Endothelial cell of umbilical vein (primary cell): ENCODE measurements at regions of chr7 and their contacts with region 1.

Region 1: DNA sequence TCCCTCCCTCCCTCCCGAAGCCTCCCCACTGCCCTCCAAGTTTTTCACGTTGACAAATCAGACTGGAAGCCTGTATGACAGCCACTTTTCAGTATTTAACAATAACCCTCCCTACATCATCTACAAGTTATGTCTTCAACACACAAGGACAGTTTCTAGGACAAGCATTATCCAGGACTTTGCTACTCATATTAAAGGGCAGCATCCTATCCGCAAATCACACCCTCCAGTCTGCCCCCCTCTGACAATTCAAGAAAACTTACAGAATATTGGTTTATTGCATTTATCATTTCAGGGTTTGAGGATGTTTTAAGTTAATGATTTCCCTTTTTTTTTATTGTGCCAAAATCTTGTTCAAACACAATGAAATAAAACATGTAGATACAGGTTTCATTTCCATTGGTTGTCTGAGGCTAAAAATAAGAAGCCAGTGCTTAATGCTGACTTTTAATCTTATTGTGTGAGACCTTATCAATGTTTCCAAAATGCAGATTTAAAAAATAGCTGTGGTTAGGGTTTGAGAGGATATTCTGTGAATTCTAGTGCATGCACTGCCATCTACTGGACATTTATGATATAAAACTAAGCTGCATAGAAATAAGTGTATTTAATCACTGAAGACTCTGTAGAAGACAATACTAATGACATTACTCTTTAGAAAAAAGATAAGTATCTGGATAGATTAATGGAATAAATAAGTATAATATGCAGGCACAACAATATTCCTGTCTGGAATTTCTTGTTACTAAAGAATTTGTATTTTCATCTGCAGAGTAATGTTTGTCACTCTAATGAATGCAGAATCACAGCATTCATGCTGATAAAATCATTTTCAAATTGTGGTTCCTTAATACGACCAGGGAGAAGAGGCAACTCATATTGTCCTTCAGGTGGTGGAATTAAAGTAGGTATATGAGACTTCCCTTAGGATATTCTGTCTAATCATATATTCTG is 64.1 kb downstream of the CAV1 start:
- DNase-seq: peak; percentile 85
- H3K4me3 ChIP-seq: no peak overlapping the region
- H3K27ac ChIP-seq: peak overlapping the region; percentile 42
- H3K4me1 ChIP-seq: peaks cover 38% of the 10 kb centered on the region
- H3K27me3 ChIP-seq: no peaks in the 10 kb centered on the region
- CTCF ChIP-seq: peak; percentile 10 to 27
- POLR2A ChIP-seq: no peak

Region 2: GRCh38 chr7:115869805-115870204 is 719.1 kb before region 1 on chr7:
- CTCF ChIA-PET with region 1: no interaction called
- POLR2A ChIA-PET with region 1: no interaction called
- dilution Hi-C with region 1: no loop called
- intact Hi-C with region 1: no loop called
- DNase-seq: no peak
- H3K4me3 ChIP-seq: no peak overlapping the region
- H3K27ac ChIP-seq: no peak overlapping the region
- H3K4me1 ChIP-seq: no peaks in the 10 kb centered on the region
- H3K27me3 ChIP-seq: peaks cover 0 to 2% of the 10 kb centered on the region in 2 experiments
- CTCF ChIP-seq: no peak
- POLR2A ChIP-seq: no peak

Region 3: GRCh38 chr7:116180302-116180701 is 408.6 kb before region 1 on chr7:
- CTCF ChIA-PET with region 1: interaction called, 144 read pairs
- POLR2A ChIA-PET with region 1: no interaction called
- dilution Hi-C with region 1: no loop called
- intact Hi-C with region 1: loop called (anchors 1 kb)
- DNase-seq: peak; percentile 70
- H3K4me3 ChIP-seq: no peak overlapping the region
- H3K27ac ChIP-seq: no peak overlapping the region
- H3K4me1 ChIP-seq: no peaks in the 10 kb centered on the region
- H3K27me3 ChIP-seq: no peaks in the 10 kb centered on the region
- CTCF ChIP-seq: peak; percentile 53 to 63
- POLR2A ChIP-seq: no peak

Region 4: GRCh38 chr7:116327752-116328151 is 261.2 kb before region 1 on chr7:
- CTCF ChIA-PET with region 1: interaction called, 5 read pairs
- POLR2A ChIA-PET with region 1: no interaction called
- dilution Hi-C with region 1: no loop called
- intact Hi-C with region 1: loop called (anchors 1 kb)
- DNase-seq: peak; percentile 97
- H3K4me3 ChIP-seq: peak overlapping the region; percentile 43 to 99 (median 98)
- H3K27ac ChIP-seq: peak overlapping the region; percentile 97
- H3K4me1 ChIP-seq: peaks cover 48% of the 10 kb centered on the region
- H3K27me3 ChIP-seq: no peaks in the 10 kb centered on the region
- CTCF ChIP-seq: no peak
- POLR2A ChIP-seq: peak; percentile 97

Region 5: GRCh38 chr7:116525913-116526861 is 62.7 kb before region 1 on chr7:
- CTCF ChIA-PET with region 1: interaction called, 64 read pairs
- POLR2A ChIA-PET with region 1: interaction called, 3 read pairs
- dilution Hi-C with region 1: no loop called
- intact Hi-C with region 1: loop called (anchors 1 kb)
- DNase-seq: peak; percentile 84
- H3K4me3 ChIP-seq: peak overlapping the region; percentile 74 to 98 (median 90)
- H3K27ac ChIP-seq: peak overlapping the region; percentile 97
- H3K4me1 ChIP-seq: peaks cover 72% of the 10 kb centered on the region
- H3K27me3 ChIP-seq: no peaks in the 10 kb centered on the region
- CTCF ChIP-seq: peak; percentile 72 to 88
- POLR2A ChIP-seq: peak; percentile 81

Region 6: DNA sequence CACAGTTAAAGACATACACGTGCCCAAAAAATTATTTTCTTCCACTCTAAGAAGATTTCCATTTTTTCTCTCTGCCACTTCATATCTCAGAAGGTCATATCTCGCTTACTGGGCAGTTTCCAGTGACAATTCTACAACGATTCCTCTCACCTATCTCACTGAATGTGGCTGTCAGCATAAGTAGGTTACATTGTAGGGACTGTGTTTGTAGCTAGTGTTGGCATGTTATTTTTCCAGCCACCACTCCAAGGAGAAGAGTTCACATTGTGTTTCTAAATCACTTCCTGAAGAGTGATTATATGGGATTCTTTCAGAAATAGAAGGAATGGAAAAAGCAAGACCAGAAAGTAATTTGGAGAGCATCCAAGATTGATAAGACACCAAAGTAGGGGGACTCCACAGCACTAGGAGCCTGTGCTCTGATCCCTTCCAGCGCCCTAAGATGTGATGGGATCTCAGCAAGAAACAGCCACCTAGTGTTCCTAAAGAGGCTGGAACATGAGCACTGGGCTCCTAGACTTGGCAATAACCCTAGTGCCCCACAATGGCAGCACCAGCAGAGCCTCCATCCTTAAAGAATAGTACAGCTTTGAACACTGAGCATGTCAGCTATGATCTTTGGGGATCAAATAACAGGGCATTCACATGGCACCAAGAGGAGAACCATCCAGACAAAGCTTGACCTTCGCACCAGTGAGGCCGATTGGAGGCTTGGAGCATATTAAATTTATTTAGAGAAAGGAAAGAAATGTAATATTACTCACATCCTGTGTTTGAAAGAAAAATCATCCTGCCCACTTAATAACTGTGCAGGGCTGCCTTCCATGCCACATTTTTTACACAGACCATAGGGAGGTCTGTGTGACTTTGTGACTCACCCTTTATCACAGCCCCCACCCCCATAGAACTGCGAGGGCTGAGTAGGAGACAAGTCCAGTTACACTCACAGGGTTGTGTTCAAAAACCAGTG is 12.3 kb before region 1 on chr7:
- CTCF ChIA-PET with region 1: interaction called, 21 read pairs
- POLR2A ChIA-PET with region 1: no interaction called
- dilution Hi-C with region 1: no loop called
- intact Hi-C with region 1: no loop called
- DNase-seq: peak; percentile 98
- H3K4me3 ChIP-seq: peak overlapping the region in 1 of 3 experiments; percentile 10
- H3K27ac ChIP-seq: peak overlapping the region; percentile 95
- H3K4me1 ChIP-seq: peaks cover 51% of the 10 kb centered on the region
- H3K27me3 ChIP-seq: no peaks in the 10 kb centered on the region
- CTCF ChIP-seq: no peak
- POLR2A ChIP-seq: peak; percentile 45

Region 7: GRCh38 chr7:116726713-116727431 is 138.0 kb after region 1 on chr7:
- CTCF ChIA-PET with region 1: interaction called, 14 read pairs
- POLR2A ChIA-PET with region 1: no interaction called
- dilution Hi-C with region 1: no loop called
- intact Hi-C with region 1: no loop called
- DNase-seq: no peak
- H3K4me3 ChIP-seq: no peak overlapping the region
- H3K27ac ChIP-seq: no peak overlapping the region
- H3K4me1 ChIP-seq: peaks cover 17% of the 10 kb centered on the region
- H3K27me3 ChIP-seq: no peaks in the 10 kb centered on the region
- CTCF ChIP-seq: no peak
- POLR2A ChIP-seq: no peak

Region 8: DNA sequence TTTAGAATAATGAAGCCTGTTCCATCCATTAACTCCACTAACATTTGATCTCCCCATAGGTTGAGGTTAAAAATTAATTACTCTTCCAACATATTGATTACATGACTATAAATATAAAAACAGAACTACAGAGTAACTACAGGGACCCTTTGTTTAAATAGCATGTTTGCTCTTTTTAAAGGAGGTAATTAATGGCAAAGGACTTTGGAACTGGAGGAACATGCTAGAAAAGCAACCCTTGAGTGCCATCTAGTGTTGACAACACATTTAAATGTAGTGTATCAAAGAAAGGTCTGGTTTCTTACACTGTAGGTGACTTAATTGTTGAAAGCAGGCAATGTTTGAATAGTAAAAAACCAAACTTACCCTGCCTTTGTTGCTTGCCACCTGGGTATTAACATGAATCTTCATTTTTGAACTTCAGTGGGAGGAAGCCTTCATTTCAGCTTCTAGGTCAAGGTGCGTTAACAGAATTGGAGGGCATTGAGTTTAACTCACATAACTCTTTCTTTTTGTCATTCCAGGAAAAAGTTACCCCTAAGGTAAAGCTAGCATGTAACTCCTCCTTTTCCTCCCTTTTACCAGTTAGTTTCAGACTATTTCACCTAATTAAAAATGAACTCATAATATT is 220.8 kb after region 1 on chr7:
- CTCF ChIA-PET with region 1: interaction called, 137 read pairs
- POLR2A ChIA-PET with region 1: no interaction called
- dilution Hi-C with region 1: no loop called
- intact Hi-C with region 1: loop called (anchors 1 kb)
- DNase-seq: peak; percentile 86
- H3K4me3 ChIP-seq: no peak overlapping the region
- H3K27ac ChIP-seq: no peak overlapping the region
- H3K4me1 ChIP-seq: peaks cover 19% of the 10 kb centered on the region
- H3K27me3 ChIP-seq: no peaks in the 10 kb centered on the region
- CTCF ChIP-seq: peak; percentile 25 to 43
- POLR2A ChIP-seq: no peak